ENCODE measurements at regions of chr19 and their contacts with region 1.

Region 1: GRCh38 chr19:18281082-18282020 is at the start of gene JUND:
- DNase-seq: peak; percentile 94 to 99 (median 99)
- ATAC-seq: peak; percentile 63 to 68
- H3K4me3 Mint-ChIP-seq: peak within 1 kb of the TSS; percentile 91 to 97 (median 96)
- H3K27ac Mint-ChIP-seq: peak within 1 kb of the TSS; percentile 96 to 100 (median 98)
- H3K4me1 Mint-ChIP-seq: peaks cover 31 to 62% (median 52%) of the 10 kb centered on the region in 4 donors
- H3K27me3 Mint-ChIP-seq: peaks cover 0 to 6% (median 0%) of the 10 kb centered on the region in 5 donors
- polyA plus RNA-seq, gene JUND: 43.3 to 169 (median 69.1) TPM

Region 2: GRCh38 chr19:18021121-18021755 is 260.1 kb before region 1 on chr19:
- POLR2A ChIA-PET with region 1: interaction called, 10 read pairs
- DNase-seq: peak; percentile 50 to 89 (median 65)
- ATAC-seq: peak; percentile 43 to 67
- H3K4me3 Mint-ChIP-seq: peak overlapping the region; percentile 22 to 82 (median 74)
- H3K27ac Mint-ChIP-seq: peak overlapping the region; percentile 91 to 99 (median 98)
- H3K4me1 Mint-ChIP-seq: peaks cover 42 to 79% (median 73%) of the 10 kb centered on the region in 4 donors
- H3K27me3 Mint-ChIP-seq: peaks cover 0 to 1% (median 0%) of the 10 kb centered on the region in 5 donors

Region 3: GRCh38 chr19:18192673-18193387 is 88.5 kb before region 1 on chr19 and contains the start of gene MPV17L2:
- POLR2A ChIA-PET with region 1: interaction called, 47 read pairs
- DNase-seq: peak; percentile 94 to 100 (median 98)
- ATAC-seq: peak; percentile 89
- H3K4me3 Mint-ChIP-seq: peak within 1 kb of the TSS; percentile 78 to 98 (median 90)
- H3K27ac Mint-ChIP-seq: peak within 1 kb of the TSS; percentile 79 to 99 (median 93)
- H3K4me1 Mint-ChIP-seq: peaks cover 7 to 28% (median 24%) of the 10 kb centered on the region in 4 donors
- H3K27me3 Mint-ChIP-seq: peaks cover 0 to 4% (median 0%) of the 10 kb centered on the region in 5 donors
- polyA plus RNA-seq, gene MPV17L2: 5.1 to 12.2 (median 9.4) TPM

Region 4: GRCh38 chr19:18322759-18323460 is 41.6 kb after region 1 on chr19 and contains the start of gene LSM4:
- POLR2A ChIA-PET with region 1: interaction called, 2,305 read pairs
- DNase-seq: peak; percentile 95 to 100 (median 99)
- ATAC-seq: peak; percentile 92 to 93
- H3K4me3 Mint-ChIP-seq: peak within 1 kb of the TSS; percentile 81 to 90 (median 86)
- H3K27ac Mint-ChIP-seq: peak within 1 kb of the TSS; percentile 89 to 98 (median 98)
- H3K4me1 Mint-ChIP-seq: peaks cover 29 to 59% (median 56%) of the 10 kb centered on the region in 4 donors
- H3K27me3 Mint-ChIP-seq: no peaks in the 10 kb centered on the region
- polyA plus RNA-seq, gene LSM4: 162 to 198 (median 181) TPM

Region 5: GRCh38 chr19:18388100-18388959 is 107.0 kb after region 1 on chr19:
- POLR2A ChIA-PET with region 1: interaction called, 22 read pairs
- DNase-seq: peak; percentile 28 to 80 (median 72)
- ATAC-seq: peak; percentile 85 to 91
- H3K4me3 Mint-ChIP-seq: peak overlapping the region; percentile 70 to 83 (median 77)
- H3K27ac Mint-ChIP-seq: peak overlapping the region in 2 of 10 donors; percentile 24 to 63
- H3K4me1 Mint-ChIP-seq: peaks cover 0 to 21% (median 8%) of the 10 kb centered on the region in 4 donors
- H3K27me3 Mint-ChIP-seq: peaks cover 10 to 57% (median 17%) of the 10 kb centered on the region in 5 donors